GM10248 (cell line): ENCODE measurements at regions of chr4 and their contacts with region 1.

Region 1: DNA sequence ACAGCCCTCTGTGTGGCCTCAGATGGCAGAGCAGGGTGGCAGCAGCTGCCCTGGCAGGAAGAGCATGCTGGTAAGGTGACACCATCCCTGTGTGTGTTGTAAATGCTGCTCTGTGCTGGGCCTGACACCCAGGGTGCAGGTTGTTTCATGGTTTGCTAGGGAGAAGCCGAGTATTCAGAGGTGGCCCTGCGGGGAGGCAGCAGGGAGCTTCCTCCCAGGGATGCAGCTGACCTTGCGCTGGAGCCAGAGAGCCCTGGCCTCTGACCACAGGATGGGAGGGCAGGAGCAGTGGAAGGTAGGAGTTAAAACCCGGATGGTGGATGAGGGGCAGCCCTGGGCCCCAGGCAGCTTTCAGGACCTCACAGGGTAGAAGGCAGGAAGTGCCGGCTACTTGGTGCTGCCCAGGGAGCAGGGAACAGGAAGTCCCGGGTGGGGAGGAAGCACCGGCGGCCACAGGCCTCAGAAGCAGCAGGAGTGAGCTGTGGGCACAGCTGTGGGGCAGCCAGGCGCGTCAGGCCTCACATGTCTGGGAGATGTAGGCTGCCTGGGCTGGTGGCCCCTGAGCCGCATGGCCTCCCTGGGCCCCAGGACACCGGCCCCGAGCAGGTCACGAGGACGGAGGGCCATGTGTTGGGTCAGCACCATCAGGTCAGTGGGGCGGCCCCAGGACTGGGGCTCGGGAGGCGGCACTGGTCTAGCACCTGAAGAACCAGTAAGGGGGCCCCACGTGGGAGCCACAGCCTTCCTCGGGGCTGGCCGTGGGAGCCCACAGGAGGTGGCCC is 19.1 kb downstream of the SH3BP2 start:
- DNase-seq: peak; percentile 75
- CTCF ChIP-seq: no peak

Region 2: GRCh38 chr4:2583517-2583916 is 228.5 kb before region 1 on chr4:
- CTCF ChIA-PET with region 1: no interaction called
- POLR2A ChIA-PET with region 1: no interaction called
- DNase-seq: no peak
- CTCF ChIP-seq: no peak

Region 3: GRCh38 chr4:2800691-2801596 is 11.1 kb before region 1 on chr4:
- CTCF ChIA-PET with region 1: interaction called, 20 read pairs
- POLR2A ChIA-PET with region 1: no interaction called
- DNase-seq: peak; percentile 80
- CTCF ChIP-seq: no peak

Region 4: DNA sequence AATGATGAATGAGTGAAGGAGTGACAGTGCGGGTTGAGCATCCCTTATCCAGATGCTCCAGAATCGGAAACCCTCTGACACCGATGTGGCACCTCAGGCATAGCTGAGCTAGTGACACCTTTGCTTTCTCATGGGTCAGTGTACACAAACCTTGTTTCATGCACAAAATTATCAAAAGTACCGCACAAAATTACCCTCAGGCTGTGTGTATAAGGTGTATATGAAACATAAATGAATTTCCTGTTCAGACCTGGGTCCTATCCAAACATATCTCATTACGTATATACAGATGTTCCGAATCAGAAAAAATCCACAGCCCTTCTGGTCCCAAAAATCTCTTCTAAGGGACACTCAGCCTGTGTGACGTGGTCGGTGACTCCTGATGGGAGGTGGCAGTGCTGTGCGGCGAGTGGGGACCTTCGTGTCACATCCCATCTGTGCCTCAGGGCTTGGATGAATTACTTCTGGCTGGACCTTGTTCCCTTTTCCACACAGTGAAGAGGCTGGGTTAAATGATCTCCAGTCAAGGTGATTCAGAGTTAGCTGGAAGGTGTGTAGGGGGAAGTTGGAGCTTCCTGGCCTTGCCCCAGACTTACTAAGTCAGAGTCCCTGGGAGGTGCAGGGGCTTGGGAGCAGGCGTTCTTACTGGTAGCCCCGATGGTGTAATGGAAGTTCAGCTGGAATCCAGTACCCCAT is 499.6 kb after region 1 on chr4:
- CTCF ChIA-PET with region 1: no interaction called
- POLR2A ChIA-PET with region 1: no interaction called
- DNase-seq: no peak
- CTCF ChIP-seq: no peak